ENCODE measurements at regions of chr17 and their contacts with region 1.

Region 1: GRCh38 chr17:3893003-3893719 is at the start of gene CAMKK1:
- DNase-seq: peak; percentile 70 to 94 (median 86)
- ATAC-seq: peak; percentile 66
- H3K4me3 ChIP-seq: peak within 1 kb of the TSS; percentile 58
- H3K4me3 Mint-ChIP-seq: peak within 1 kb of the TSS; percentile 91
- H3K27ac ChIP-seq: peak within 1 kb of the TSS; percentile 15 to 46
- H3K27ac Mint-ChIP-seq: peak within 1 kb of the TSS; percentile 94
- H3K4me1 ChIP-seq: peaks cover 34% of the 10 kb centered on the region
- H3K4me1 Mint-ChIP-seq: peaks cover 37% of the 10 kb centered on the region
- H3K27me3 ChIP-seq: no peaks in the 10 kb centered on the region
- H3K27me3 Mint-ChIP-seq: no peaks in the 10 kb centered on the region
- CTCF ChIP-seq: no peak
- total RNA-seq, gene CAMKK1: 4.8 to 4.9 TPM

Region 2: GRCh38 chr17:2801841-2802240 is 1091.3 kb before region 1 on chr17:
- CTCF ChIA-PET with region 1: no interaction called
- POLR2A ChIA-PET with region 1: no interaction called
- intact Hi-C with region 1: loop called in 1 of 2 experiments (anchors 5 kb)
- DNase-seq: no peak
- ATAC-seq: no peak
- H3K4me3 ChIP-seq: no peak overlapping the region
- H3K4me3 Mint-ChIP-seq: peak overlapping the region; percentile 27
- H3K27ac ChIP-seq: no peak overlapping the region
- H3K27ac Mint-ChIP-seq: no peak overlapping the region
- H3K4me1 ChIP-seq: peaks cover 45% of the 10 kb centered on the region
- H3K4me1 Mint-ChIP-seq: peaks cover 36% of the 10 kb centered on the region
- H3K27me3 ChIP-seq: no peaks in the 10 kb centered on the region
- H3K27me3 Mint-ChIP-seq: no peaks in the 10 kb centered on the region
- CTCF ChIP-seq: no peak

Region 3: GRCh38 chr17:4049546-4049945 is 156.4 kb after region 1 on chr17:
- CTCF ChIA-PET with region 1: no interaction called
- POLR2A ChIA-PET with region 1: no interaction called
- intact Hi-C with region 1: no loop called
- DNase-seq: no peak
- ATAC-seq: no peak
- H3K4me3 ChIP-seq: no peak overlapping the region
- H3K4me3 Mint-ChIP-seq: no peak overlapping the region
- H3K27ac ChIP-seq: no peak overlapping the region
- H3K27ac Mint-ChIP-seq: no peak overlapping the region
- H3K4me1 ChIP-seq: peaks cover 24% of the 10 kb centered on the region
- H3K4me1 Mint-ChIP-seq: peaks cover 20% of the 10 kb centered on the region
- H3K27me3 ChIP-seq: no peaks in the 10 kb centered on the region
- H3K27me3 Mint-ChIP-seq: no peaks in the 10 kb centered on the region
- CTCF ChIP-seq: no peak